AG04449 (cell line): ENCODE measurements at regions of chr1 and their contacts with region 1.

Region 1: DNA sequence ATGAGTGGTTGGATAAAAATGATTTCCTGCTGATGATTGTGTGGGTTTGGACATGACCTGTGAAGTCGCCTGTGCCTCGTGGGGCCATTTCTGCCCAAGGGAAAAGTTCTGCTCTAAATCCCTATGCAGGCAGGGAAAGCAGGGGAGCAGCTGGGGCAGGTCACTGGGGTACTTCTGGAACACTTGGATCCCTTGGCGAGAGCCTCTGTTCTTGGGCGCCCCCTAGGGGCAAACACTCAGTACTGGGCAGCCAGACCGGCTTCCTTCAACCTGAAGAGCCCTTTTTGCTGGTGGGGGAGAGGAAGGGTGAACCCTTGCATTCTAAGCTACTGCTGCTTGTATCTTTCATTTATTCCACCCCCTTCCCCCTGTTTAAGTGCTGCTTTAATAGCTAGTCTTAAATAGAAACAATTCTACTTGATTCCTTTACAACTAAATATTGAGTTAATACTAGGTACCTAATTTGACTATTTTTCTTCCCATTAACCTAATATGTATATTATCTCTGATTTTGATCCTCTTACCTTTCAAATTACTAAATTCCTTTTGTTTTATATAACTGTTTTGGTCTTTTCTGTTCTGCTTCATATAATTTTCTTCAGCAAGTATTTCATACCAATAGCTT is 5.1 kb upstream of the CLEC20A start:
- DNase-seq: no peak
- H3K4me3 ChIP-seq: no peak overlapping the region
- CTCF ChIP-seq: peak; percentile 90

Region 2: GRCh38 chr1:178143730-178144690 is 357.8 kb before region 1 on chr1:
- CTCF ChIA-PET with region 1: no interaction called
- POLR2A ChIA-PET with region 1: no interaction called
- DNase-seq: no peak
- H3K4me3 ChIP-seq: no peak overlapping the region
- CTCF ChIP-seq: no peak

Region 3: GRCh38 chr1:178300352-178300699 is 201.5 kb before region 1 on chr1:
- CTCF ChIA-PET with region 1: interaction called, 70 read pairs
- POLR2A ChIA-PET with region 1: no interaction called
- DNase-seq: no peak
- H3K4me3 ChIP-seq: no peak overlapping the region
- CTCF ChIP-seq: no peak

Region 4: GRCh38 chr1:178324003-178324402 is 177.8 kb before region 1 on chr1:
- CTCF ChIA-PET with region 1: interaction called, 18 read pairs
- POLR2A ChIA-PET with region 1: no interaction called
- DNase-seq: no peak
- H3K4me3 ChIP-seq: no peak overlapping the region
- CTCF ChIP-seq: no peak

Region 5: GRCh38 chr1:178465011-178465410 is 36.8 kb before region 1 on chr1:
- CTCF ChIA-PET with region 1: interaction called, 65 read pairs
- POLR2A ChIA-PET with region 1: no interaction called
- DNase-seq: peak; percentile 23
- H3K4me3 ChIP-seq: no peak overlapping the region
- CTCF ChIP-seq: no peak

Region 6: DNA sequence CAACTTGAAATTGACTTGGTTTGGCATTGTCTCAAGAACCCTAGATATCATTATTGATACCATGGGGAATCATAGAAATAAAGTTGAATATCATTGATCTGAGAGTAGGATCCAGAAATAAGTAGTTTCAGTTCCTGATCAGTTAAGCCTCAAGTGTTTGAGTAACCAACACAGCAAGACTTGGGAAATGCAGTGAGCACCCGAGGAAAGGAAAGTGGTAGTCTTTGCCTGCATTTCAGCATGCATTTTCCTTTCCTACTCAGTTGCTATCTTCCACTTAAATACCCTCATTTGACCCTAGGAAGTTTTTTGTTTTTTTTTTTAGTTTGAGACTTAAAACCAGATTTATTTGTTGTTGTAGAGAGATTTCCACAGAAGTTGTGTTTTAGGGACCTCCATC is 24.0 kb before region 1 on chr1:
- CTCF ChIA-PET with region 1: interaction called, 125 read pairs
- POLR2A ChIA-PET with region 1: no interaction called
- DNase-seq: no peak
- H3K4me3 ChIP-seq: no peak overlapping the region
- CTCF ChIP-seq: no peak

Region 7: GRCh38 chr1:178513278-178514022 is 11.6 kb after region 1 on chr1:
- CTCF ChIA-PET with region 1: interaction called, 205 read pairs
- POLR2A ChIA-PET with region 1: no interaction called
- DNase-seq: no peak
- H3K4me3 ChIP-seq: no peak overlapping the region
- CTCF ChIP-seq: peak; percentile 2

Region 8: GRCh38 chr1:179002552-179003345 is 500.9 kb after region 1 on chr1:
- CTCF ChIA-PET with region 1: interaction called, 34 read pairs
- POLR2A ChIA-PET with region 1: no interaction called
- DNase-seq: no peak
- H3K4me3 ChIP-seq: no peak overlapping the region
- CTCF ChIP-seq: peak; percentile 88